ENCODE measurements at regions of chr1 and their contacts with region 1.

Region 1: DNA sequence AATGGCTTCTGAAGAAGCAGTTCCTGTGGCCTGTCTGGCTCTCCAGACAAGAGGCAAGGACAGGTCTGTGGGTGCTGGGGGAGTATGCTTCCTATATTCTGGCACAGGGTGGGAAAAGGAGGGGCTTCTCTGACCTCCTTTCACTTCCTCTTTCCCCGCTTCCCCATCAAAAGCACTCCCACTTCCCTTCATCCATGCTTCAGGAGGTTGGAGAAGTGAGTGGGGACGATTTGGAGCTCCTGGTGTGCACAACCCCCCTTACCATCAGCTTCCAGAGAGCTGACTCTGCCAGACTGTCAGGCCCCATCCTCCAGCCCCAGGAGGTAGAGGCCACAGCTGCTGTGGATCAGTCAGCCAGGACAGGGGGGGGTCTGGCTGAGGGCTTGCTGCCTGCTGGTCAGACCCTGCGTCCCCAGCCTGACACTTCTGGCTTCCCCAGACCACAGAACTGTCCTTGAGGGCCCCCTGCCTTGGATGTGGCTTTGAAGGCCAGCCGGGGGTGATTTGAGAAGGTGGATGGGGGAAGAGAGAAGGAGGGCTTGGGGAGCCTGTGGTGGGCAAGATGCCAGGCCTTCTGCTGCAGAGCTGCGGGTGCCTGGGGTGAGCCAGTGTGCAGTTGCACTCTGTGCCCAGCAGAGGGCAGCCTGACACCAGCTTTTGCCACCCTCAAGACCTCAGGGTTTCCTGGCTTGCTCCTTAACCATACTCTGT is 21.5 kb upstream of the TMEM222 start:
- DNase-seq: peak; percentile 82
- ATAC-seq: peak; percentile 79
- H3K4me3 Mint-ChIP-seq: no peak overlapping the region
- H3K27ac Mint-ChIP-seq: peak overlapping the region; percentile 48; the same call in 1 of the 2 replicates
- H3K4me1 Mint-ChIP-seq: peaks cover 25% of the 10 kb centered on the region
- H3K27me3 Mint-ChIP-seq: no peaks in the 10 kb centered on the region
- CTCF ChIP-seq: peak; percentile 100

Region 2: DNA sequence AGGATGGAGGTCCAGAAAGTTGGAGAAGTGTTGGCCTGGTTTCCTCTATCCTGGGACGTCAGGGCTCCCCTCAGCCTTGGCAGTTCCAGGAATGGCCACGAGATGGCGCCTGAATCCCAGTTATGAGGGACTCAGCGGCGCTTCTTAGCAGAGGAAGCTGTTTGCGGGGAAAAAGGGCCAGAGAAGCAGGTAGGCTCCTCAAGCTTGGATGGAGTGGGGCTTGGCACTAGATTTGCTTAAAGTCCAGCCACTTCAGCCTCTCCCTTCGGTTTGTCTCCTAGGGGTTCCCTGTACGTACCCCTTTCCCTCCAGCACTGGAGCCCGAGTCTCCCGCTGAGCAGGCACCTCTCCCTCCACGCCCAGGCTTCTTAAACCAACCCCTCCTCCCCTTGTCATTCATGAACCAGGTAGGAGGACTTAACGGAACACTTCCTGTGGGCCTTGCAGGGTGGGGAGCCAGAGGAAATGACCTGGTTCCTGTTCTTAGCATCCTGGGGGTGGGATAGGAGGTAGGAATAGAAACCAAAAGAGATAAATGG is 255.8 kb before region 1 on chr1:
- CTCF ChIA-PET with region 1: interaction called, 31 read pairs
- POLR2A ChIA-PET with region 1: no interaction called
- DNase-seq: peak; percentile 97
- ATAC-seq: peak; percentile 78
- H3K4me3 Mint-ChIP-seq: peak overlapping the region; percentile 29
- H3K27ac Mint-ChIP-seq: no peak overlapping the region
- H3K4me1 Mint-ChIP-seq: peaks cover 58% of the 10 kb centered on the region
- H3K27me3 Mint-ChIP-seq: no peaks in the 10 kb centered on the region
- CTCF ChIP-seq: peak; percentile 97

Region 3: DNA sequence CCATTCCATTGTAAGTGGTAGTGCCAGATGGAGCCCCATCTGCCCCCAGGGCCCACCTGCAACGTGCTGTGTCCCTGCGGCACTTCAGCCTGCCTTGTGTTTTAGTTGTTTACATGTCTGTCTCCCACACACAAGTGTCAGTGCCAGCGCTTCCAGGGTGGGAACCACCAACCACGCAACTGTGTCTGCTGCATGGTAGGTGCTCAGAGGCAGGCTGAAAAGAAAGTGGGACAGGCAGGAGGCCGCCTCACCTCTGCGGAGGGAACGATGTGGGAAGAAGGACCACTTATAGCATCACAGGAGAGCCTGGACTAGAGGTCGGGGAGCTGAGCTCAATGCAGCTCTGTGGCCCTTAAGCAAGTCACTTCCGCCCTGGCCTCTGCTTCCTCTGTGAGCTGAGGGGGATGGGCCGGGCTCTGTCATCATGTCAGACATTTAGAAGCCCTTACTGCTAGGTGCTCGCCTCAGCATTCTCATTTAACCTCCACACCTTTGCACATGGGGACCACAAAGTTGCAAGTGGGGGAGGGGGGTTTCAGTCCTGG is 163.4 kb before region 1 on chr1:
- CTCF ChIA-PET with region 1: interaction called, 16 read pairs
- POLR2A ChIA-PET with region 1: no interaction called
- DNase-seq: no peak
- ATAC-seq: peak; percentile 7; the same call in 1 of the 2 replicates
- H3K4me3 Mint-ChIP-seq: no peak overlapping the region
- H3K27ac Mint-ChIP-seq: peak overlapping the region; percentile 42; the same call in 1 of the 2 replicates
- H3K4me1 Mint-ChIP-seq: peaks cover 39% of the 10 kb centered on the region
- H3K27me3 Mint-ChIP-seq: no peaks in the 10 kb centered on the region
- CTCF ChIP-seq: no peak

Region 4: GRCh38 chr1:27284425-27285273 is 15.8 kb before region 1 on chr1:
- CTCF ChIA-PET with region 1: interaction called, 20 read pairs
- POLR2A ChIA-PET with region 1: no interaction called
- DNase-seq: peak; percentile 90
- ATAC-seq: peak; percentile 88
- H3K4me3 Mint-ChIP-seq: no peak overlapping the region
- H3K27ac Mint-ChIP-seq: peak overlapping the region; percentile 17
- H3K4me1 Mint-ChIP-seq: no peaks in the 10 kb centered on the region; the same call in 1 of the 2 replicates
- H3K27me3 Mint-ChIP-seq: no peaks in the 10 kb centered on the region
- CTCF ChIP-seq: peak; percentile 91

Region 5: GRCh38 chr1:27332536-27333281 is 32.2 kb after region 1 on chr1:
- CTCF ChIA-PET with region 1: interaction called, 70 read pairs
- POLR2A ChIA-PET with region 1: no interaction called
- DNase-seq: peak; percentile 80
- ATAC-seq: peak; percentile 92
- H3K4me3 Mint-ChIP-seq: no peak overlapping the region
- H3K27ac Mint-ChIP-seq: no peak overlapping the region; the same call in 1 of the 2 replicates
- H3K4me1 Mint-ChIP-seq: no peaks in the 10 kb centered on the region
- H3K27me3 Mint-ChIP-seq: no peaks in the 10 kb centered on the region; the same call in 1 of the 2 replicates
- CTCF ChIP-seq: peak; percentile 88

Region 6: DNA sequence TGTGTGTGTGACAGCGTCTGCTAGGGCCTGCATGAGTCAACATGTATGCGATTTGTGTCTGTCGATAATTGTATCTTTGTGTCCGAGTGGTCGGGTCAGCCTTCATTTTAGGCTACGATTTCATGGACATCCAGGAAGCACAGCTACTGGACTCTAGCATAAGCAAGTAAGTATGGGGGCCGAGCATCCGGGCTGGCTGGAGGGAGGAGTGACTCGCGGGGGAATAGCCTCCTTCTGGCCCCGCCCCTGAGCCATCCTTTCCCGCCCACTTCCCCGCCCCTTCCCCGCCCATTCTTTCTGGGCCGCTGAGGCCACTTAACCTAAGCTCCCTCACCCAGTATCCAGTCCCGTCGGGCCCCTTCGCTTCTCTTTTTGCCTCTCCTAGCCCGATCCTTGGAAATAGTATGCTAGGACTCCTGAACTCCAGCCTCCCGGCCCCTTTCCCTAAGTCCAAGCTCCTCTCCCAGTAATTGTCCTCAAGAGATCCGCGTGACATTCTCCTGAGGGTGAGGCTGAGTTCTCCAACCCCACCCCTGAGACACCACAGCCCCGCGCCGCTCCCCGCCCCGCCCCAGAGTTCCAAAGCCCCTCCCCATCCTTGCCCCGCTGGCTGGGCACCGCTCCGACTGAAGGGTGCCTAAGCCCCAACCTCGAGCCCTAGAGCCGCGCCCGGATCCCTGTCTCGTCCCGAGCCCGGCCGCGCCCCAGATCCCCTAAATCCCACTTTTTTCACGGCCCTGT is 65.0 kb after region 1 on chr1:
- CTCF ChIA-PET with region 1: interaction called, 50 read pairs
- POLR2A ChIA-PET with region 1: interaction called, 4 read pairs
- DNase-seq: peak; percentile 86
- ATAC-seq: peak; percentile 53
- H3K4me3 Mint-ChIP-seq: peak overlapping the region; percentile 84
- H3K27ac Mint-ChIP-seq: peak overlapping the region; percentile 97
- H3K4me1 Mint-ChIP-seq: peaks cover 25% of the 10 kb centered on the region
- H3K27me3 Mint-ChIP-seq: peaks cover 33% of the 10 kb centered on the region
- CTCF ChIP-seq: no peak

Region 7: DNA sequence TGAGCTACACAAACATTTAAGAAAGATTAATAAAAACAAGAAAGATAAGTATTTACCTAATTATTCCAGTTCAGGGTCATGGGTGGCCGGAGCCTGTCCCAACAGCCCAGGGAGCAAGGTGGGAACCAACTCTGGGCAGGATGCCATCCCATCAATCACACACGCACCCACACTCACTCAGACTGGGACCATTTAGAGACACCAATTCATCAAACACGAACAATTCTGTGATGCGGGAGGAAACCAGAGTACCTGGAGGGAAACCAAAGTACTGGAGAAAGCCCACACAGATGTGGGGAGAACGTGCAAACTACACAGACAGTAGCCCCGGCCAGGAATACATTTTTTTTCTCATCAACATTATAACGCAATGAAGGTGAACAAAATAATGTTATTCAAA is 173.3 kb after region 1 on chr1:
- CTCF ChIA-PET with region 1: no interaction called
- POLR2A ChIA-PET with region 1: no interaction called
- DNase-seq: no peak
- ATAC-seq: no peak
- H3K4me3 Mint-ChIP-seq: no peak overlapping the region
- H3K27ac Mint-ChIP-seq: no peak overlapping the region; the same call in 1 of the 2 replicates
- H3K4me1 Mint-ChIP-seq: peaks cover 40% of the 10 kb centered on the region
- H3K27me3 Mint-ChIP-seq: no peaks in the 10 kb centered on the region
- CTCF ChIP-seq: no peak

Region 8: DNA sequence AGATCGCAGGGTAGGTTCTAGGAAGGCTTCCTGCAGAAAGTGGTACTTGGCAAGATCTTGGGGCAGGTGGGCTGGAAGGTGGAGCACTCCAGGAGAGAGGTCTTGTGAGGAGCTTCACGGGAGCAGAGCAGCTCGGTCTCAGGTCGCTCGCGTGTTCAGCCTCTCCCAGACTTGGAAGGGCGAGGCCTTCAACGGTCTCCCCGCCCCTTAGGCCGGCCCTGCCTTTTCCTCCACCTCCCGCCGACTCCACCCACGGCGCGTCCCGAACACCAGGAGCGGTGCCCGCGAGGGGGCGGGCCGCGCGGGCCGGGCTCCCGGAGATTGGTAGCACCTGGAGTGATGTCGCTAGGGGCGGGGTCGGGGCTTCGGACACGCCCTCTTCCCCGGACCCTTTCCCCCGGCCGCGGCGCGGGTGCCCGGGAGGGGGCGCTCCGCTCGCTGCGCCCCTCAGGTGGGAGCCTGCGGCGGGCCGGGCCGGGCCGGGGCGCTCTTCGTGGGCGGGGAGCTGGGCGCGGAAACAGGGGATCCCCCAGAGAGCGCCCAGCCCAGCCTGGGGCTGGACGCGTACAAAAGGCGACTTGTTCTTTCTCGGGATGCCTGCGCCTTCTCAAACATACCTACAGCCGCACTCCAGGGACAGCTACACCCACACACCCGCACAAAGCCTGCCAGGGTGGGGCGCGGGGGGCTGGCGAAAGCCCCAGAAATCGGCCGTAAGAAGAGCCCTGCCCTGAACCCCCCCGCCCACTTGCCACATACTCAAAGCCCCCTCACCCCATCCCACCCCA is 268.0 kb after region 1 on chr1:
- CTCF ChIA-PET with region 1: interaction called, 10 read pairs
- POLR2A ChIA-PET with region 1: no interaction called
- DNase-seq: peak; percentile 93
- ATAC-seq: peak; percentile 59
- H3K4me3 Mint-ChIP-seq: peak overlapping the region; percentile 58
- H3K27ac Mint-ChIP-seq: peak overlapping the region; percentile 39; the same call in 1 of the 2 replicates
- H3K4me1 Mint-ChIP-seq: peaks cover 88% of the 10 kb centered on the region
- H3K27me3 Mint-ChIP-seq: no peaks in the 10 kb centered on the region
- CTCF ChIP-seq: peak; percentile 70